ENCODE measurements at regions of chr10 and their contacts with region 1.

Region 1: GRCh38 chr10:15137636-15138035 is 30.9 kb downstream of the NMT2 start:
- DNase-seq: no peak
- ATAC-seq: no peak
- H3K4me3 ChIP-seq: no peak overlapping the region
- H3K27ac ChIP-seq: no peak overlapping the region
- H3K4me1 ChIP-seq: no peaks in the 10 kb centered on the region
- H3K27me3 ChIP-seq: no peaks in the 10 kb centered on the region
- CTCF ChIP-seq: no peak

Region 2: DNA sequence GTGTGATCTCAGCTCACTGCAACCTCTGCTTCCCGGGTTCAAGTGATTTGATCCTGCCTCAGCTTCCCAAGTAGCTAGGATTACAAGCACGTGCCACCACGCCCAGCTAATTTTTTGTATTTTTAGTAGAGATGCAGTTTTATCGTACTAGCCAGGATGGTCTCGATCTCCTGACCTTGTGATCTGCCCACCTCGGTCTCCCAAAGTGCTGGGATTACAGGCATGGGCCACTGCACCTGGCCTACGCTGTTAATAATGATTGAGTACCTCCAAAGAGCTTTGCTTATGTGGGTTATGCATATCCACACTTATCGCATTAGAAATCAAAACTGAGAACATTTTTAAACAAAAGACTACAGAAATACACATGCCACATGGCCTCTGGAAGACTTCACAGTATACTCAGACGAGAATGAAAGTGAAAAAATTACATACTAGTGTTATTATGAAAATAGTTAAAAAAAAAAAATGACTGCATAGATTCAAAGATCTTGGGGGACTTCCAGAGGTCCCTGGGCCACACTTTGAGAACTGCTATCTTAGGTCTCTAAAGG is 15.1 kb before region 1 on chr10:
- CTCF ChIA-PET with region 1: no interaction called
- POLR2A ChIA-PET with region 1: interaction called, 21 read pairs
- in situ Hi-C with region 1: no loop called
- intact Hi-C with region 1: no loop called
- DNase-seq: no peak
- ATAC-seq: no peak
- H3K4me3 ChIP-seq: no peak overlapping the region
- H3K27ac ChIP-seq: no peak overlapping the region
- H3K4me1 ChIP-seq: no peaks in the 10 kb centered on the region
- H3K27me3 ChIP-seq: no peaks in the 10 kb centered on the region
- CTCF ChIP-seq: no peak

Measured in Panc1 (cell line).